ENCODE measurements at regions of chr12 and their contacts with region 1.

Region 1: GRCh38 chr12:110468212-110469048 is at the starts of genes FAM216A and GPN3:
- DNase-seq: peak; percentile 99
- total RNA-seq, gene FAM216A: 68.9 and 76.3 TPM in 2 replicates
- total RNA-seq, gene GPN3: 33.8 and 59.0 TPM in 2 replicates

Region 2: DNA sequence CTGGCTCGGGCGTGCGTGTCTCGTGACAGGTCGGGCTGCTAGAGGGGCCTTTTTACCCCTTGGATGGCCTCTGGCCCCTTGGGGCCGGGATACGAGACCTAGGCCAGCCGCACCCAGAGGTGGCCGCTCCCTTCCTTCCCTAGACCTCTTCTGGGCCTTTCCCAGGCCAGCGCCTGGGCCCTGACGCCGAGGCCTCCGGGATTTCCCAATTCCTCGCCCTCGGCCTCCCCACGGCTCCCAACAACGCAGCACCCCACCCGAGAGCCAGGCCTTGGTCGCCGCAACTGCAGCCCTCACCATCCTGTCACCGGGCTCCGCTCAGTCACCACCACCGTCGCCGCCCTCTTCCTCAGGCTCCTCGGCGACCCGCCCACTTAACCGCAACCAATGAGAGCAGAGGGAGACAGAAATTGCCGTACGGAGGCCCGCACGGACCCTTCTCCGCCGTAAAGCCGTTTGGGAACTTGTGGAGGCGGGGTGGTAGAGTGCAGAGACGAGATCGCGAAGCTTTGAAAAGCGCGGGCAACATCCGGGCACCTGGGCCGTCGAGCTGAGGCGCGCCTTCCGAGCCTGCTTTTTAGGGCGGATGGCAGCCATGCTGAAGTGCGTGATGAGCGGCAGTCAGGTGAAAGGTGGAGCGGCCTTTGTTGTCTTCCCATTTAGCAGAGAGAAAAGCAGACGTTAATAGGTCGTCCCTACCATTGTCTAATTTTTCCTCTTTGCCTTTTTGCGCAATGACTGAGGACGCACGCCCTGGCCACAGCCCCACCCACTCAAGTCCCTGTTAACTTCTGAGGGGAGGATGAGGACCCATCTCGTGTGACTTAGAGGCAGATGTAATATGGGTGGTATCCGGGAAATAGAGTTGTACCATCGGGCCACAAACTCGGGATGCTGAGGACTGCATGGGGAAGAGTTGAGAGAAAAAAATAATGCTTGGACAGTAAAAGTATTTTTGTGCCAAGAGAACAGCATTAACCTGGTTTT is 33.6 kb after region 1 on chr12 and contains the starts of genes RAD9B and VPS29:
- in situ Hi-C with region 1: loop called (anchors 5 kb)
- DNase-seq: peak; percentile 96
- total RNA-seq, gene RAD9B: 0.41 TPM in 1 of 2 replicates, not detected in the other
- total RNA-seq, gene VPS29: 35.3 and 45.0 TPM in 2 replicates

Region 3: DNA sequence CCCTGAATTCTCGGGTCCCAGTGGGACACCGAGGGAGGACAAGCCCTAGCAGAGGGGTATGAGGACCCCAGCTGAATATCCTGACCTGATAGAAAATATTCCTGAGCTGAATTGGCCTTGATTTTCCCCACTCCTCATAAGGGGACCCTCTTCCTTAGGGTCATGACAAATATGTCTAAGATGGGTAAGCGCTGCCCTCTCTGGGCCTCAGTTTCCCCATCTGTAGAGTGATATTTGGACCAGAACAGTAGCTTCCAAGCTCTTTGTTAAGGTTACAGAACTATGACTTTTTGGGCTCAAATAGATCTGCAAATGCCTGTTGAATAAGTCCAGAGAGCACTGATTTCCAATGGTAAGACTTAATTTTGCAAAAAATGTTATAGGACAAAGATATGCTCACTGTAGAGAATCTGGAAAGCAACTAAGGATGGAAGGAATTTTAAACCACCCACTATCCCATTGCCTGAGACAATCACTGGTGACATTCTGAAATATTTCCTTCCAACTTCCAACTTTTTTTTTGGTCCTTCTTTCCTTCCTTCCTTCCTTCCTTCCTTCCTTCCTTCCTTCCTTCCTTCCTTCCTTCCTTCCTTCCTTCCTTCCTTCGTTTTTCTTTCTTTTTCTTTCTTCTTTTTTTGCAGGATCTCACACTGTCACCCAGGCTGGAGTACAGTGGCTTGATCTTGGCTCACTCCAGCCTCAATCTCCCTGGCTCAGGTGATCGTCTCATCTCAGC is 420.0 kb after region 1 on chr12:
- in situ Hi-C with region 1: no loop called
- DNase-seq: no peak